Activated CD8-positive, alpha-beta T cell treated with anti-CD3 and anti-CD28 coated beads for 36 hours (primary cell): ENCODE measurements at regions of chr9 and their contacts with region 1.

Region 1: DNA sequence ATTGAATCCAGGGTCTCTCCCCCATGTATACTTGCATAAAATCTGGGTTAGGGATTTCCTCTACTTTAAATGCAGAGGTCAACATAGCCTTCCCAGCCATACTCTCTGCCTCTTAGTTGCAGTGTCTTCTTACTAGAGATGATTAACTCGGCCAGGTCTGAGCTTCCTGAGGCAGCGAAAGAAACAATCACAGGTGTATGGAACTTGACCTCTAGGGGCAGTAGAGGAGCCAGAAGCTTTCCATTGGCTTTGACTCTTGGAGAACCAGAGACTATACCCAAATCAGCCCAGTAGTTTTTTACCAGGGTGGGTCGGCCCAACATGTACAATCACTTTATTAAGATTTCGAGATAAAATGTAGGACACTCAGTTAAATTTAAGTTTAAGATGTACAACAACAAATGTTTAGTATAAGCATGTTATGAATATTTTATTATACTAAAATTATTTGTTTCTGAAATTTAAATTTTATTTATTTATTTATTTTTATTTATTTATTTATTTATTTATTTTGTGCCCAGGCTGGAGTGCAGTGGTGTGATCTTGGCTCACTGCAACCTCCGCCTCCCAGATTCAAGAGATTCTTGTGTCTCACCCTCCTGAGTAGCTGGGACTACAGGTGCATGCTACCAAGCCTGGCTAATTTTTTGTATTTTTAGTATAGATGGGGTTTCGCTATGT is 48.0 kb upstream of the DMRT3 start:
- DNase-seq: peak; percentile 14
- ATAC-seq: no peak
- H3K4me3 Mint-ChIP-seq: no peak overlapping the region
- H3K27ac Mint-ChIP-seq: no peak overlapping the region
- H3K4me1 Mint-ChIP-seq: no peaks in the 10 kb centered on the region
- H3K27me3 Mint-ChIP-seq: peaks cover 7% of the 10 kb centered on the region
- CTCF ChIP-seq: peak; percentile 57

Region 2: DNA sequence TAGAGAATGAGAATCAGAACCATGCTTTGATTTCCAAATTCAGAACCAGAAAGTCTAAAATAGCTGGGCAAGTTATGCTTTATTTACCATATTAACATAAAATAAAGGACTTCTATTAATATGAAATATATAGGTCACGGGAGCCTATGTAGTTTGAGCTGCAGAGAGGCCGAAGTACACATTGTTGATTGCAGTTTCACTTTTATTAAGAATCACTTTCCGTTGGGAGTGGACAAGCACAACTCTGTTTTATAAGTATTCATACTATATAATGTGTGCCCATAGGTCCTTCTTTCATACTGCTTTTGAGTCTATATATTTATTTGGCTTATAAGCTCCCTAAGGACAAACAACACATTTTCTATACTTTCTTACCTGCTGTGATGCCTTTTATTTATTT is 10.8 kb before region 1 on chr9:
- CTCF ChIA-PET with region 1: interaction called, 20 read pairs
- POLR2A ChIA-PET with region 1: interaction called, 3 read pairs
- intact Hi-C with region 1: no loop called
- DNase-seq: no peak
- ATAC-seq: no peak
- H3K4me3 Mint-ChIP-seq: no peak overlapping the region
- H3K27ac Mint-ChIP-seq: no peak overlapping the region
- H3K4me1 Mint-ChIP-seq: no peaks in the 10 kb centered on the region
- H3K27me3 Mint-ChIP-seq: peaks cover 10% of the 10 kb centered on the region
- CTCF ChIP-seq: no peak